Activated B cell treated with CpG ODN at 0.5 μM for 24 hours (primary cell): ENCODE measurements at regions of chr12 and their contacts with region 1.

Region 1: GRCh38 chr12:11746024-11746771 is 96.7 kb downstream of the ETV6 start:
- DNase-seq: no peak
- ATAC-seq: peak; percentile 73
- H3K4me3 Mint-ChIP-seq: peak overlapping the region; percentile 67
- H3K27ac Mint-ChIP-seq: peak overlapping the region; percentile 93
- H3K4me1 Mint-ChIP-seq: peaks cover 97% of the 10 kb centered on the region
- H3K27me3 Mint-ChIP-seq: no peaks in the 10 kb centered on the region
- CTCF ChIP-seq: no peak

Region 2: DNA sequence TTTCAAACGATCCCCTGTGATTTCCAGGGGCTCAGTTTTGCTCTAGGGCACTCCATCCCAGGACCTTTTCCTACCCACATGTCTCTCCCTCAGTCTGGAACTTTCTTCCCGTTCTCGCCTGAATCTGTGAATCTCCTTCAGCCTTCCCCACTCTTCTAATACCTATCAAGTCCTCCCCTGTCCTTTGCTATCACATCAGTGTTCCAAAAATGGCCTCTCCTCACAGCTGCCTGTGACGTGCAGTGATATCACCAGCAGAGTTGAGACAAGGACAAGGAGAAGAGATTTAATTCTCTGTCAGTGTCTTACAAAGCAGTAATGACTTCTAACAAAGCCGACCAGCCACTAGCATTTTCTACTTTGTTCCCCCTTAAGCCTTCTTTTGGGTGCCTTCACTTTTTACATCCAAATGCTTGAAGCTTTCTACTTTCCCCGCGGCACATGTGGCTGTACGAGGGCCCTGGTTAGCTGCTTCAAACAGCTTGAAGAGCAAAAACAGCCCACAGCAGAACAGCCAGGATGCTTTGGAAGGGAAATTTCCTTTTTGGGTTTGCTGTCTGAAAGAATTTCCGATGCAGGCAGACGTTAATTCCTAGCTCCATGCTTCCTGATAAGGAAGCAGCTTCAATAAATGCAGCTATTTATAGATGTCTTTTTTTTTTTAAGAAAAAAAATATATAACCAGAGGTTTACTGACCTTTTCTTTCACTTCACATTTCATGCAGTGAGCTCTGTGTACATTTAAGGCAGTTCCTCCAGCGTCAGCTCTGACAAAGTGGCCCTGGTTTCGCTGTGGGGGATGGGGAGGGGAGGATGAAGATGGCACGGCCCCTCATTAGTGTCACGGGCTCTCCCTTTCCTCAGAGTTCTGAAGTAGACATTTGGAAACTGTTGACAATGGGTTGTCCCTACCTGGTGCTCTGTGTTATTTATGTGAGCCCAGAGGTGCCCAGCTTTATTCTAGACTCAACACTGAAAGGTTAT is 12.6 kb after region 1 on chr12:
- CTCF ChIA-PET with region 1: interaction called, 8 read pairs
- POLR2A ChIA-PET with region 1: interaction called, 433 read pairs
- intact Hi-C with region 1: loop called (anchors 1 kb)
- DNase-seq: no peak
- ATAC-seq: peak; percentile 74
- H3K4me3 Mint-ChIP-seq: peak overlapping the region; percentile 59
- H3K27ac Mint-ChIP-seq: peak overlapping the region; percentile 91
- H3K4me1 Mint-ChIP-seq: peaks cover 72% of the 10 kb centered on the region
- H3K27me3 Mint-ChIP-seq: no peaks in the 10 kb centered on the region
- CTCF ChIP-seq: no peak

Region 3: DNA sequence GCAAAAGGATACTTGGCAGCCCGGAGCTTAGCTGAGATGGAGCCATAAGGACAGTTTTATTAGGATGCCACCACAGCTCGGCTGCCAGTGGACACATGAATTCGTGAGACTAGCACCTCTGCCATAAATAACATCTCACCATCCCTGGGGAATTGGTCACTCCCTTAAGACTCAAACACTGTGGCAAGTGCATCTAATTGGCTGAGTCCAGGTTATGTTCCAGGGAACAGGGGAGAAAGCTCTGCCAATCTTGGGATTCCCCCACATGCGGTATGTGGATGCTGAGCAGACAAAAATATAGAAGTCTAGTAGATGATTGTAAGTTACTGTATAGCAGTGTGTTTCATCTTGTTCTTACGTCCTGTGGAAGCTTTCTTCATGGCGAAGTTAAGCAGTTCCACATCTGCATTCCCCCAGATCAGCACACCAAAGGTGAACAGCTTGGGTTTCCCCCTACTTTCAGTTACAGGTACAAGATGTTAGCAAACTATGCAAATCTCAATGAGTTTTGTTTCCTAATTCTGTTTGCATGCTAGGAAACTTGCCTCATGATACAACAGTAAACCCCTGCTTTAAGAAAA is 34.4 kb after region 1 on chr12:
- CTCF ChIA-PET with region 1: no interaction called
- POLR2A ChIA-PET with region 1: interaction called, 14 read pairs
- intact Hi-C with region 1: no loop called
- DNase-seq: no peak
- ATAC-seq: peak; percentile 76
- H3K4me3 Mint-ChIP-seq: peak overlapping the region; percentile 24
- H3K27ac Mint-ChIP-seq: peak overlapping the region; percentile 68
- H3K4me1 Mint-ChIP-seq: peaks cover 50% of the 10 kb centered on the region
- H3K27me3 Mint-ChIP-seq: no peaks in the 10 kb centered on the region
- CTCF ChIP-seq: no peak

Region 4: DNA sequence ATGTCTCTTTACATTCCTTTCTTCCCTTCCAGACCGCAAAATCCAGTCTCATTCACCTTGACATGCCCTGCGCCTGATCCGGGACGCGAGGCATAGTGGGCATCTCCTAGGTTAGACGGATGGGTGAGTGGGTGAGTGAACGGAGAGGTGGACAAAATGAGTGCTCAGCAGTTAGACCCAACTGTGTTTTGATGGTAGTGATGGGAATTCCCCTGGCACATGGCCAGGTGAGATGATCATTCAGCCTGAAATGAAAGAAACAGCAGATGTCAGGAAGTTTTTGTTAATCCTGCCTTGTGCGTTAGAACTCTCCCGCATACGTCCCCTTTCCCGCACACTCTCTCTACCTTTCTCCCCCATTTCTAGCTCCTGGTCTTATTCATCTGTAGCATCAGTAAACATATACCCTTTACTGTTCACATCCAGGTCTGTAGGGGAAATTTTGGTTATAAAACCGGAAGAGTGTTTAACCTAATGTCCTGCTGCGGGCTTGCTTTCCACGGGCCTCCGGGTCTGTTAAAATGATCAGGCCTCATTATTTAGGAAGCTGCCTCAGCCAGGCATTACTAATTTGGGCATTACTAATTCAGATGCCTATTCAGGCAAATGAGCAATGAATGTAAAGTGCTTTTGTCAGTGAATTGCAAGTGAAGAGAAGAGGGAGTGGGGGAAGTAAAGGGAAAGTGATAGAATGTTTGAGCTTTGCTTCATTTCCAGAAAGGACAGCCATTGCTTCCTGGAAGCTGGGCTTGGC is 76.1 kb after region 1 on chr12:
- CTCF ChIA-PET with region 1: no interaction called
- POLR2A ChIA-PET with region 1: interaction called, 14 read pairs
- intact Hi-C with region 1: no loop called
- DNase-seq: peak; percentile 48
- ATAC-seq: peak; percentile 70
- H3K4me3 Mint-ChIP-seq: peak overlapping the region; percentile 70
- H3K27ac Mint-ChIP-seq: peak overlapping the region; percentile 93
- H3K4me1 Mint-ChIP-seq: peaks cover 52% of the 10 kb centered on the region
- H3K27me3 Mint-ChIP-seq: no peaks in the 10 kb centered on the region
- CTCF ChIP-seq: no peak

Region 5: GRCh38 chr12:11855983-11856374 is 109.8 kb after region 1 on chr12:
- CTCF ChIA-PET with region 1: no interaction called
- POLR2A ChIA-PET with region 1: interaction called, 12 read pairs
- intact Hi-C with region 1: no loop called
- DNase-seq: no peak
- ATAC-seq: peak; percentile 39
- H3K4me3 Mint-ChIP-seq: peak overlapping the region; percentile 67
- H3K27ac Mint-ChIP-seq: peak overlapping the region; percentile 81
- H3K4me1 Mint-ChIP-seq: peaks cover 35% of the 10 kb centered on the region
- H3K27me3 Mint-ChIP-seq: no peaks in the 10 kb centered on the region
- CTCF ChIP-seq: no peak

Region 6: DNA sequence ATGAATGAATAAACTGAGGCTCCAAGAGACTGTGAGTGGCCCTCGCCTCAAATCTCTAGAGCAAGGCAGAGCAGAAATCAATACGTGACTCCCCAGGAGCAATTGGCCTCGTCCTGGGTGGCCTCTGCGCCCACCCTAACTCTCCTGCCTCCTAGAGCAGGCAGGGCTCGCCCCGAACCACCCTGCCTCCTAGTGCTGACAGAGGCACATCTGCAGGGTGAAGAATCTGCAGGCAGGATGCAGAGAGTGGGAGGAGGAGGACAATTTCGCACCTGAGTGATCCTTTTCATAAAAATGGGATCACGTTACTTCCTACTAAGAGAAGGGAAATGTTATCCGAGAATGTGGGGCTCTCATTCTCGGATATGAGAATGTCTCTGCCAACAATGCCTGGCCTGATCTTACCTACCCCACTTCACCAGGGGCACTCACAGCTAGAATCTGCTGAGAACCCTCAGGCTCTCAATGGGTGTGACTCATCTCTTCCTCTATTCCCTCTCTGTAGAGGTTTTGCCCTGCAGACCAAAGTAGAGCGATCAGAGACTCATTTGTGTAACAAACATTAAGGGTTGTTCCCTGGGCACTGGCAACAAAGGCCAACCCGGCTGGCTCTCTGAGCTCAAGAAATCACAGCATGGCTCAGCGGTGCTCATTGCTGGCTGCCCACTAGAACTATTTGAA is 262.9 kb after region 1 on chr12:
- CTCF ChIA-PET with region 1: no interaction called
- POLR2A ChIA-PET with region 1: interaction called, 10 read pairs
- intact Hi-C with region 1: loop called (anchors 5 kb)
- DNase-seq: no peak
- ATAC-seq: peak; percentile 60
- H3K4me3 Mint-ChIP-seq: peak overlapping the region; percentile 78
- H3K27ac Mint-ChIP-seq: peak overlapping the region; percentile 81
- H3K4me1 Mint-ChIP-seq: peaks cover 60% of the 10 kb centered on the region
- H3K27me3 Mint-ChIP-seq: no peaks in the 10 kb centered on the region
- CTCF ChIP-seq: no peak